ENCODE measurements at regions of chr1 and their contacts with region 1.

Region 1: DNA sequence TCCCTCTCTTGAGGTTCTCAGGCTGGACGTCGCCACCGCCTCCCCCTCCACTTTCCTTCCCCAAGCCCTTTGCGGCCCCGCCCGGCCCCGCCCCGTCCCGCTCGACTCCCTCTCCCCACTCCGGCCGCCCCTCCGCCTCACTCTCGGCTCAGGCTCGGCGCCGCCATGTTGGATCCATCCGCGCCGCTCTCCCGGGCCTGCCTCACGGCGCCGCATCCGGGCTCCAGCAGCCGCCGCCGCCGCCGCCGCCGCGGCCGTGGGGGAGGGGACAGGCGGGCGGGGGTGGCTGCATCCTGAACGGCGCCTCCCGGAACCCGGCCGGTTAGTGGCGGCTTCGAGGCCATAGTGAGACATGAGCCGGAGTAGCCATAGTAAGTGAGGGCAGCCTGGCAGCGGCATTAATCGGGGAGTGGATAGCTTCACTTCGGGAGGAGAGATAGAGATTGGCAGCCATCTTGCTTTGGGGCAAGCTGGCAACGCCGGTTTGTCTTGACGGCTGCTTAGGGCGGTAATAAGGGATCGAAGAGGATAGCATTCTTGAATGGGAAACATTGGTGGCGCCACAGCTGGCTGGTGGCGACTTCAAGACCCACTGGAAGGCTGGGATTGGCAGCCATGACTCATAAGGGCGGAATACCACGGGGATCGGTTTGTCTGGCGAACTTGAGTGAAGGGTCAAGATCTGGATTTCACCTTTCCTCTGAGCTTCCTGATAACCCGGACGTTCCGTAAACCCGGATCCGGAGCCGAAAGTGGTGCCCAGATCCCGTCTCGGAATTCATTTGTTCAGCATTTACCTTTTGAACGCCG is at the start of gene DEDD:
- DNase-seq: peak; percentile 95 to 96
- ATAC-seq: peak; percentile 96 to 98
- H3K4me3 ChIP-seq: peak within 1 kb of the TSS; percentile 83 to 91 (median 84)
- H3K27ac ChIP-seq: peak within 1 kb of the TSS; percentile 94 to 98 (median 96)
- H3K4me1 ChIP-seq: peaks cover 55 to 56% of the 10 kb centered on the region in 2 donors
- H3K27me3 ChIP-seq: no peaks in the 10 kb centered on the region
- CTCF ChIP-seq: no peak
- POLR2A ChIP-seq: peak; percentile 65 to 68
- total RNA-seq, gene DEDD: 40.2 to 60.2 (median 46.3) TPM

Region 2: DNA sequence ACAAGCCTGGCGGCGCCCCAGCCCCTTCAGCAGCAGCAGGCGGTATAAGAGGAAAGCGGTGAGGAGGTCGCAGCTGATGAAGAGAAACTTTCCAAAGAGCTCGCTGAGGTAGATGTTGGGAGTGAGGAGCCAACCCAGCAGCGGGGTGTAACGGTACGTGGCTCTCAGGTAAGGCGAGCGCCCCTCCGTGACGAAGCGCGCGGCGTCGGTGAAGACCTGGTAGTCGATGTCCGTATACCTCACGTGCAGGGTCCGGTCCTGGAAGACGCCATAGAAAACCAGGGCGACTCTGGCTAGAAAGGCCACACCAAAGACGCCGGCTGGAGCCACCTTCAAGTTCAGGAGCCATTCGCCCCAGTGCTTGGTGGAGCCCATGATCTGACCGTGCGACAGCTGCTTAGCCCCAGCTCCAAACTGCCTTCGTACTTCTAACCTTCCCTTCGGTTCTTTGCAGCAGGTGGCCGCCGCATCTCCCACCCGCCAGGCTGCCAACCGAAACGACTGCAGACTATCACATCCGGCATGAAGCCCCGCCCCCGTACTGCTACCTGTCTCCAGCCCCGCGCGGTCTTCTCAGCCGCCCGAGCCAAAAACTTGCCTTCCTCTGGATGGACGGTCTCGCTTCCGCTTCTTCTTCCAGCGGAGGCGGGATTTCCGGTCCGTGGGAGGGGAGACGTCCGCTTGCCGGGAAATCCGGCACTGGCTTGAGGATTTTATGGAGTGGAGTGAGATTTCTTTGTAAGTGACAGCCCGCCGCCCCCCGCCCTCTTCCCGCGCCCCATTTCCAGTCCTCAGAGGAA is 1101.0 kb before region 1 on chr1 and contains the start of gene PIGM:
- in situ Hi-C with region 1: no loop called
- intact Hi-C with region 1: loop called (anchors 10 kb)
- DNase-seq: peak; percentile 90 to 94
- ATAC-seq: peak; percentile 97
- H3K4me3 ChIP-seq: peak within 1 kb of the TSS; percentile 80 to 94 (median 88)
- H3K27ac ChIP-seq: peak within 1 kb of the TSS; percentile 74 to 88 (median 81)
- H3K4me1 ChIP-seq: peaks cover 18 to 23% of the 10 kb centered on the region in 2 donors
- H3K27me3 ChIP-seq: no peaks in the 10 kb centered on the region
- CTCF ChIP-seq: no peak
- POLR2A ChIP-seq: peak in 1 of 2 donors; percentile 57
- total RNA-seq, gene PIGM: 0.55 to 0.75 (median 0.72) TPM

Region 3: GRCh38 chr1:160777486-160778089 is 355.0 kb before region 1 on chr1:
- in situ Hi-C with region 1: no loop called
- intact Hi-C with region 1: no loop called
- DNase-seq: no peak
- ATAC-seq: no peak
- H3K4me3 ChIP-seq: no peak overlapping the region
- H3K27ac ChIP-seq: no peak overlapping the region
- H3K4me1 ChIP-seq: no peaks in the 10 kb centered on the region
- H3K27me3 ChIP-seq: no peaks in the 10 kb centered on the region
- CTCF ChIP-seq: no peak
- POLR2A ChIP-seq: no peak

Region 4: DNA sequence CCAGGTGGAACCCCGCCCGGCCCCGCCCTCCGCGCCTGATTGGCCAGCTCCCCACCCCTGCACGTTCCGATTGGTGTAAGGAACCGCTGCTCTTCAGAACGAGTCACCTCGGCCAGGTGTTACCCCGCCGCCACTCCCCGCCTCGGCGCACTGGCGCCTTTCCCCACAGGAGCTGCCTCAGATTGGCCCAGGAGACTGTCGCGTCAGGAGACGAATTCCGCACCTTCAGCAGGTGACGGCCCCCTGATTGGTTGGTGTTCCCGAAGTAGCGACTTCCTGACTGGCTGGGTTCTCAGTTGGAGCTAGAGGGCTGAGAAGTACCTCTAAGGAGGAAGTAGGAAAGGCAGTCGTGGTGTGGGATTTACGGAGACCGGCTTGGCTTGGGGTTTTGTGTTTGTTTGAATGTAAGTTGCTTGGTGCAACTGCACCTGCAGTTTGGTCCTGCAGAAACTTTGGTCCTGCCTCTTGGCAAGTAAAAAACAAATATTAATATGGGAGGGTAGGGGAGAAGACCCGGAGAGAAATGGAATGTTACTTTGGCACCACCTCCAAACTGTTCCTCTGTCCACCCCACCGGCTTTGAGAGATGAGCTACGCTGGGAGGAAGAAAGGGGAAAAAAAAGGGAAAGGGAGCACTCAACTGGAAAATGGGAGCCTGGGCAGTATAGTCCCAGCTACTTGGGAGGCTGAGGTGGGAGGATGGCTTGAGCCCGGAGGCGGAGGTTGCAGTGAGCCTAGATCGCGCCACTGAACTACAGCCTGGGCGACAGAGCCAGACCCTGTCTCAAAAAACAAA is 111.3 kb before region 1 on chr1:
- in situ Hi-C with region 1: no loop called
- intact Hi-C with region 1: no loop called
- DNase-seq: peak; percentile 53 to 82
- ATAC-seq: peak; percentile 83 to 94
- H3K4me3 ChIP-seq: peak overlapping the region; percentile 50 to 70 (median 64)
- H3K27ac ChIP-seq: peak overlapping the region; percentile 67 to 79 (median 78)
- H3K4me1 ChIP-seq: peaks cover 0 to 12% of the 10 kb centered on the region in 2 donors
- H3K27me3 ChIP-seq: peaks cover 0 to 33% (median 8%) of the 10 kb centered on the region in 3 donors
- CTCF ChIP-seq: no peak
- POLR2A ChIP-seq: peak in 1 of 2 donors; percentile 11

Region 5: DNA sequence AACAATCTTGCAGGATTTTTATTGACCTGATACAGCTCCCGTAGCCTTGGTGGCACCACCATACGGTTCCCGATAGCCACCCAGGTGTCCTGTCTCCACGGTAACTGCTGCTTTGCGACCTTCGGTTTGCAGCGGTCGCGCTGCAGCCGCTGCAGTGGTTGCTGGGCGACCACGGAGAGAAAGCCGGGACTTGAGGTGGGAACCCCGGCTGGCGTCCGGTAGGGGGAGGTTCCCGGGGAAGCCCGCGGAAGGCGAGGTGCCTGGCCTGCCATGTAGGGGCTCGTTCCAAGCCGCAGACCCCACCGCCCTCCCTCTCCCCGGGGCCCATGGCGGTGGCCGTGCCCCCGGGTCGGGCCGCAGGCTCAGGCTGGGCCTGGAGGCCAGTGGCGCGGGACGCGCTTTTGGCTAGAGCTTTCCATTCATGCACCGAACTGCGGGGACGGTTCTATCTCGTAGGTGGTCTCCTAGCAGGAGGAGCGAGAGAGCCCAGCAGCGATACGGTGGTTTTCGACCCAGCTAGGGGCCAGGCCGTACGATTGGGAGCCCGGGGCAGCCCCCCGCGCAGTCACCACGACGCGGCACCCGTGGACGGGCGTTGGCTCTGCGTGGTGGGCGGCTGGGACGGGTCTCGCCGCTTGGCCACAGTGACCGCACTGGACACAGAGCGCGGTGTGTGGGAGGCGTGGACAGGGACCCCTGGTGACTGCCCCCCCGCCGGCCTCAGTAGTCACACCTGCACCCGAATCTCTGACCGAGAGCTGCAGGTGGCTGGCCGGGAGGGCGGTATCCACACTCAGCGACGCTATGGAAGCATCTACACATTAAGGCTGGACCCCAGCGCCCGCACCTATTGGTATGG is 34.2 kb before region 1 on chr1 and contains the start of gene KLHDC9:
- in situ Hi-C with region 1: no loop called
- intact Hi-C with region 1: loop called (anchors 2 kb)
- DNase-seq: peak; percentile 28 to 68
- ATAC-seq: peak; percentile 70 to 84
- H3K4me3 ChIP-seq: peak within 1 kb of the TSS; percentile 62 to 80 (median 66)
- H3K27ac ChIP-seq: peak within 1 kb of the TSS; percentile 62 to 74 (median 68)
- H3K4me1 ChIP-seq: peaks cover 5 to 19% of the 10 kb centered on the region in 2 donors
- H3K27me3 ChIP-seq: no peaks in the 10 kb centered on the region
- CTCF ChIP-seq: no peak
- POLR2A ChIP-seq: no peak
- total RNA-seq, gene KLHDC9: 0.89 to 2.4 (median 1.3) TPM

Region 6: DNA sequence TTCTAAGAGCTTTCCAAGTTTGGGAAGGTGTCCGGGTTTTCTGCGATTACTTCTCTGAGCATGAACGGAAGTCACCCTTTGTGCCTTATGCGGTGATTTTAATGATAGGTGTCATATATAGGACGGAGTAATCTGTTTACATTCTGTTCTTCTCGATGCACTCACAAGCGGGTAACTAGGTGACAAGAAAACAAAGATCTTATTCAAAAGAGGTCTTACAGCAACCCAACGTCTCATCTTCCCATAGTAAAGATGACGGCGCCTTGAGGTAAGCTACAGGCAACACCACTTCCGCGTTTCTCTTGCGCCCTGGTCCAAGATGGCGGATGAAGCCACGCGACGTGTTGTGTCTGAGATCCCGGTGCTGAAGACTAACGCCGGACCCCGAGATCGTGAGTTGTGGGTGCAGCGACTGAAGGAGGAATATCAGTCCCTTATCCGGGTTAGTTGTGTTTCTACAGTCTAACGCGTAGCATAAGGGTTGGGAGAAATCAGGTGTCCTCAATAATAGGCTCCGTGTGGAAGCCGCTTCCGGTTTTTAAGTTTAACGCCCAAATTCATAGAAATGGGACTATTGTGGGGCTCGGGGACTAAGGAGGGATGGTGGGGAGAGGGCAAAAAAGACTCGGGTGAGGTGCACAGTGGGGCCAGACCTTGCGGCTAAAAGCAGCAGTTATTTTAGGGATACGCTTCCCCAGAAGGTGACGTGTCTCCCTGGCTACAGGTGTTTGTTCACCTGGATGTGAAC is 21.2 kb after region 1 on chr1 and contains the start of gene UFC1:
- in situ Hi-C with region 1: no loop called
- intact Hi-C with region 1: loop called (anchors 1 kb)
- DNase-seq: peak; percentile 68 to 74
- ATAC-seq: peak; percentile 97 to 98
- H3K4me3 ChIP-seq: peak within 1 kb of the TSS; percentile 73 to 96 (median 82)
- H3K27ac ChIP-seq: peak within 1 kb of the TSS; percentile 88 to 98 (median 92)
- H3K4me1 ChIP-seq: peaks cover 9 to 18% of the 10 kb centered on the region in 2 donors
- H3K27me3 ChIP-seq: no peaks in the 10 kb centered on the region
- CTCF ChIP-seq: no peak
- POLR2A ChIP-seq: peak in 1 of 2 donors; percentile 26
- total RNA-seq, gene UFC1: 57.9 to 66.7 (median 63.5) TPM

Region 7: GRCh38 chr1:161201828-161202725 is 69.5 kb after region 1 on chr1 and contains the start of gene NDUFS2:
- in situ Hi-C with region 1: no loop called
- intact Hi-C with region 1: loop called (anchors 2 kb)
- DNase-seq: peak; percentile 99
- ATAC-seq: peak; percentile 97
- H3K4me3 ChIP-seq: peak within 1 kb of the TSS; percentile 66 to 93 (median 84)
- H3K27ac ChIP-seq: peak within 1 kb of the TSS; percentile 94 to 99 (median 98)
- H3K4me1 ChIP-seq: peaks cover 58 to 81% of the 10 kb centered on the region in 2 donors
- H3K27me3 ChIP-seq: no peaks in the 10 kb centered on the region
- CTCF ChIP-seq: peak in 1 of 5 experiments; percentile 18
- POLR2A ChIP-seq: peak; percentile 82 to 86
- total RNA-seq, gene NDUFS2: 206 to 260 (median 226) TPM

Region 8: DNA sequence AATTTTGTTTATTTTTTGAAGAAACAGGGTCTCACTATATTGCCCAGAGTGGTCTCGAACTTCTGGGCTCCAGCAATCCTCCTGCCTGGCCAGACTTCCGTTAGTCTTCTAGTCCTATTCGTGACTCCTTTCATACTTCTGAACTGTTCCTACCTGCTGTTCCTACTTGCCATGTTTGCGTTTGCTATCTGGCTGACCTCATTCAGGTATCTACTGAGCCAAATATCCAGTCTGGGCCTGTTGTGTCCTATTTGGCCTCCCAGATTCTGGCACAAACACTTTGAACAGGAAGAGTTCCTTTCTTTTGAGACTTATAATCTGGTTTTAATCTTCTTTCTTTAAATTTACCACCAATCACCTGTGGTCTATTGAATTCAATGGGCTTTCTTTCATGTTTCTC is 112.3 kb after region 1 on chr1:
- in situ Hi-C with region 1: no loop called
- intact Hi-C with region 1: no loop called
- DNase-seq: no peak
- ATAC-seq: no peak
- H3K4me3 ChIP-seq: no peak overlapping the region
- H3K27ac ChIP-seq: no peak overlapping the region
- H3K4me1 ChIP-seq: no peaks in the 10 kb centered on the region
- H3K27me3 ChIP-seq: no peaks in the 10 kb centered on the region
- CTCF ChIP-seq: no peak
- POLR2A ChIP-seq: no peak

Measured in gastrocnemius medialis (tissue), 4 donors.